ENCODE measurements at regions of chr5 and their contacts with region 1.

Region 1: DNA sequence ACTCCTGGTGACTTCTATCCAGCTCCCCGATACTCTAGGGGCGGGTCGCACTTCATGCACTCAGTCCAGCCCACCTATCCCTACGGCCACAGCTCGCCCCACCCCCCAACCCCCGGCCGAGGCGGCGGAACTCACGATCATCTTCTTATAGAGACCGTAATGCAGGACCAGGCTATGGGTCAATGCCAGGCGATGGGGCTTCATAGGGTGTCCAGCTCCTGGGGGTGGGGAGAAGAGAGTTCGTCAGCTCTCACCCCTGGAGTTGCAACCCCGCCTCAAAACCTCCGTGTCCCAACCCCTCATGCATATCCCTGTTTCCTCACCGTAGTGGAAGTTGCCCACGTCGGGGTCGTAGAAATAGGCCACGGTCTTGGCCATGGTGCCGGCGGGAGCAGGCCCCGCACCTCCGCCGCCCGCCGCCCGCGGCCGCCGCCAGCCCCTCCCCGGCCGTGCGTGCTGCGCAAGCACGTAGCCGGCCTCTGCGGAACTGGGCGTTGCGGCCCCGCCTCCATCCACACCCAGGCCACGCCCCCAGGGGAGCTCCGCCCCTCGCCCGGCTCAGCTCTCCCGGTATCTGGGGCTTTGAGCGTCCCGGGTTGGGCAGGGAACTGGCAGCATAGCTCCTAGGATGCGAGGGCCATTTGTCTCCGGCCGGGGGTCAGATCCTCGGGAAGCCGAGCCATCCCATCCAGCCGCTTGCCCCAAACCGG is at the starts of genes HDAC3 and RELL2:
- DNase-seq: peak; percentile 78 to 100
- H3K4me3 ChIP-seq: peak within 1 kb of the TSS; percentile 84 to 99 (median 98)
- H3K27ac ChIP-seq: peak within 1 kb of the TSS; percentile 86
- H3K4me1 ChIP-seq: peaks cover 0 to 5% (median 3%) of the 10 kb centered on the region in 4 experiments; a peak in 5 of 7 replicates
- H3K27me3 ChIP-seq: peaks cover 0 to 4% (median 0%) of the 10 kb centered on the region in 4 experiments; a peak in 1 of 7 replicates
- CTCF ChIP-seq: no peak
- EP300 ChIP-seq: no peak
- POLR2A ChIP-seq: peak in 1 of 2 experiments; percentile 75; a peak in 2 of 3 replicates
- RAD21 ChIP-seq: no peak
- total RNA-seq, gene HDAC3: 98.5 and 99.0 TPM in 2 replicates
- total RNA-seq, gene RELL2: 18.6 and 19.2 TPM in 2 replicates

Region 2: DNA sequence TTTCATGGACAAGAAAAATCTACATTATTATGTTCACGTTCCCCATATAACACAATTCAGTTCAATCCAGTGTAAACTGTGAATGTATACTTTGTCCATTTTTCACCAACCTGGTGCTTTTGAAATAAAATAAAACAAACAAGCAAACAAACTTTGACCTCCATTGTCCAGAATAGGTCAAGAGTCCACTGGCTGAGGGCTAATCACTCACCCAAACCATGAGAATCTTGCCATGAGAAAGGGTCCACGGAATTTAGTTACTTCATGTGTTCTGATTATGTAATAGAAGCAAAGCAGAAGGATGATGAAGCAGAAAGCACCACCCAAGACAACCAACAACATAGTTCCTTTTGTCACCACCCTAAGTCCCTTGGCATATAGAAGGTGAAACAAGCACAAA is 46.4 kb before region 1 on chr5:
- CTCF ChIA-PET with region 1: interaction called, 32 read pairs
- POLR2A ChIA-PET with region 1: interaction called, 14 read pairs
- DNase-seq: no peak
- H3K4me3 ChIP-seq: no peak overlapping the region
- H3K27ac ChIP-seq: no peak overlapping the region
- H3K4me1 ChIP-seq: no peaks in the 10 kb centered on the region
- H3K27me3 ChIP-seq: no peaks in the 10 kb centered on the region
- CTCF ChIP-seq: no peak
- EP300 ChIP-seq: no peak
- POLR2A ChIP-seq: no peak
- RAD21 ChIP-seq: no peak

Region 3: GRCh38 chr5:141598391-141599350 is 37.9 kb before region 1 on chr5:
- CTCF ChIA-PET with region 1: interaction called, 32 read pairs
- POLR2A ChIA-PET with region 1: interaction called, 14 read pairs
- DNase-seq: no peak
- H3K4me3 ChIP-seq: no peak overlapping the region
- H3K27ac ChIP-seq: no peak overlapping the region
- H3K4me1 ChIP-seq: no peaks in the 10 kb centered on the region; a peak in 1 of 7 replicates
- H3K27me3 ChIP-seq: no peaks in the 10 kb centered on the region
- CTCF ChIP-seq: no peak
- EP300 ChIP-seq: no peak
- POLR2A ChIP-seq: no peak
- RAD21 ChIP-seq: no peak

Region 4: GRCh38 chr5:141618804-141619554 is 17.6 kb before region 1 on chr5 and contains the start of gene DIAPH1:
- CTCF ChIA-PET with region 1: interaction called, 117 read pairs
- POLR2A ChIA-PET with region 1: interaction called, 75 read pairs
- DNase-seq: peak; percentile 92 to 94
- H3K4me3 ChIP-seq: peak within 1 kb of the TSS; percentile 74 to 97 (median 84)
- H3K27ac ChIP-seq: peak within 1 kb of the TSS; percentile 77
- H3K4me1 ChIP-seq: peaks cover 2 to 7% (median 4%) of the 10 kb centered on the region in 4 experiments; a peak in 3 of 7 replicates
- H3K27me3 ChIP-seq: no peaks in the 10 kb centered on the region
- CTCF ChIP-seq: peak; percentile 83 to 97 (median 87)
- EP300 ChIP-seq: peak in 1 of 2 experiments; percentile 99; a peak in 2 of 3 replicates
- POLR2A ChIP-seq: peak in 1 of 2 experiments; percentile 74; a peak in 1 of 3 replicates
- RAD21 ChIP-seq: peak; percentile 63 to 74
- total RNA-seq, gene DIAPH1: 107 and 114 TPM in 2 replicates

Region 5: GRCh38 chr5:141650851-141651727 is 14.5 kb after region 1 on chr5 and contains the start of gene FCHSD1:
- CTCF ChIA-PET with region 1: interaction called, 21 read pairs
- POLR2A ChIA-PET with region 1: interaction called, 96 read pairs
- DNase-seq: peak; percentile 66 to 95
- H3K4me3 ChIP-seq: peak within 1 kb of the TSS; percentile 43 to 83 (median 67)
- H3K27ac ChIP-seq: no peak within 1 kb of the TSS
- H3K4me1 ChIP-seq: peaks cover 2 to 8% (median 6%) of the 10 kb centered on the region in 4 experiments; a peak in 6 of 7 replicates
- H3K27me3 ChIP-seq: no peaks in the 10 kb centered on the region; a peak in 1 of 7 replicates
- CTCF ChIP-seq: no peak
- EP300 ChIP-seq: no peak
- POLR2A ChIP-seq: peak in 1 of 2 experiments; percentile 27; a peak in 1 of 3 replicates
- RAD21 ChIP-seq: no peak; a peak in 1 of 4 replicates
- total RNA-seq, gene FCHSD1: 30.1 and 32.2 TPM in 2 replicates

Region 6: DNA sequence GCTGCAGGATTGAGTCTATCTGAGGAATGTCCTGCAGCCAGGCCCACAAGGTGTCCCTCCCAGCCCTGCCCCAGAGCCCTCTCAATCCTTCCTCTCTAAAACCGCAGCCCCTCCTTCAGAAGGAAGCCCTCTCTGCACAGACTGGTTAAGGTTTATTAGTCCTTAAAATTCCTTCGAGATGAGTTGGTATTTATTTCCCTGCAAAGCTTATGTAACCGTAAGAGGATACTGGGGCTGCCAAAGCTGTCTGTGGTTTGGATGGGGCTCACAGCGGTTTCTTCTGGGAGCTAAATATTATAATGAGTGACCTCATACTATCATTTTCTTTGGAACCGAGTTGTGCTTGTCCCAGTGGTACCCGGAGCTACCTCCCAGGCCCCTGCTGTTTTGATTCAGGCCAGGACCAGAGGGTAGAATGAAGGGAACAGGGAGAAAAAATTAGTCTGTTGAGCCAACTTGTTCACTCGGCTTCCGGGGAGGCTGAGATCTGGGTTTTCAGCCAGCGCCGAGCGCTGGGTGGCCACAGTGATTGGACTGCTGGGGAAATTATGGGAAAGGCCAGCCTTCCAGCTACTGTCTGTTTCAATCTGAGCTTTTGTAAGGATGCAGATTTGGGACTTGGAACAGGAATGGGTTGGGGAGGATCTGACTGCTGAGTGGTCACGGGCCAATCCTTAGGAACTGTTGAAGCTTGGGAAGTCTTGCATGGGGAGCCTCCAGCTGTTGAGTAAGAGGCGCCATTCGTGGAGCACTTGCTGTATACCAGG is 579.5 kb after region 1 on chr5:
- CTCF ChIA-PET with region 1: no interaction called
- POLR2A ChIA-PET with region 1: no interaction called
- DNase-seq: no peak
- H3K4me3 ChIP-seq: no peak overlapping the region
- H3K27ac ChIP-seq: no peak overlapping the region
- H3K4me1 ChIP-seq: peaks cover 3 to 6% (median 4%) of the 10 kb centered on the region in 4 experiments; a peak in 6 of 7 replicates
- H3K27me3 ChIP-seq: no peaks in the 10 kb centered on the region
- CTCF ChIP-seq: no peak
- EP300 ChIP-seq: no peak
- POLR2A ChIP-seq: no peak
- RAD21 ChIP-seq: no peak

Measured in H1 (cell line).